ENCODE measurements at regions of chr3 and their contacts with region 1.

Region 1: DNA sequence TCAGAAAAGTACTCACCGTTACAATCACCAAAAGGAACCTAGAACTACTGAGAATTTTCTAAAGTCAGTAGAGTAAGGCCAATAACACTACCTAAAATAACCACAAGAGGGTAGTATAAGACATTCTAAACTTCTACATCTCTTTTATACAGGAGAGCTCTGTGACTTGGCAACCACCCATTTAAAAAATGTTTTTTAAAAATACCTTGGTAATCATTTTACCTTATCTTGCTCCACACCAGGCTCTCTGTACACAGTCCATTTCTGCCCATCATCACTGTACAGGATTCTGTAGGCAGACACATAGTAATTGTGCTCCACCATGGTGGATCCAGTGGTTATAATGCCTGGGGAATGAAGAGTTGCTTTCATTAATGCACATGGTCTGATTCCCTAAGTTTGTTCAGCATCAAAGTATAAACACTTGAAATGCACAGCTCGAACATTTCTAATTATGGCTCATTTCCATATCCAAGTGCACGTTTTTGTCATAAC is 54.5 kb downstream of the ST3GAL6 start:
- DNase-seq: no peak
- ATAC-seq: peak; percentile 68 to 87
- H3K4me3 ChIP-seq: no peak overlapping the region
- H3K27ac ChIP-seq: no peak overlapping the region
- H3K4me1 ChIP-seq: no peaks in the 10 kb centered on the region
- H3K27me3 ChIP-seq: no peaks in the 10 kb centered on the region
- CTCF ChIP-seq: peak; percentile 60 to 84 (median 75)
- POLR2A ChIP-seq: no peak

Region 2: GRCh38 chr3:98039322-98040024 is 778.1 kb before region 1 on chr3:
- in situ Hi-C with region 1: loop called in 1 of 4 experiments (anchors 25 kb)
- intact Hi-C with region 1: no loop called
- DNase-seq: peak; percentile 4 to 15
- ATAC-seq: peak; percentile 94 to 96
- H3K4me3 ChIP-seq: peak overlapping the region; percentile 16 to 36 (median 27)
- H3K27ac ChIP-seq: no peak overlapping the region
- H3K4me1 ChIP-seq: no peaks in the 10 kb centered on the region
- H3K27me3 ChIP-seq: no peaks in the 10 kb centered on the region
- CTCF ChIP-seq: peak; percentile 50 to 82 (median 75)
- POLR2A ChIP-seq: no peak

Region 3: GRCh38 chr3:98602078-98602678 is 215.4 kb before region 1 on chr3:
- in situ Hi-C with region 1: loop called (anchors 5 to 10 kb)
- intact Hi-C with region 1: no loop called
- DNase-seq: no peak
- ATAC-seq: peak; percentile 51 to 56
- H3K4me3 ChIP-seq: no peak overlapping the region
- H3K27ac ChIP-seq: no peak overlapping the region
- H3K4me1 ChIP-seq: no peaks in the 10 kb centered on the region
- H3K27me3 ChIP-seq: no peaks in the 10 kb centered on the region
- CTCF ChIP-seq: peak; percentile 29 to 70 (median 55)
- POLR2A ChIP-seq: no peak

Region 4: DNA sequence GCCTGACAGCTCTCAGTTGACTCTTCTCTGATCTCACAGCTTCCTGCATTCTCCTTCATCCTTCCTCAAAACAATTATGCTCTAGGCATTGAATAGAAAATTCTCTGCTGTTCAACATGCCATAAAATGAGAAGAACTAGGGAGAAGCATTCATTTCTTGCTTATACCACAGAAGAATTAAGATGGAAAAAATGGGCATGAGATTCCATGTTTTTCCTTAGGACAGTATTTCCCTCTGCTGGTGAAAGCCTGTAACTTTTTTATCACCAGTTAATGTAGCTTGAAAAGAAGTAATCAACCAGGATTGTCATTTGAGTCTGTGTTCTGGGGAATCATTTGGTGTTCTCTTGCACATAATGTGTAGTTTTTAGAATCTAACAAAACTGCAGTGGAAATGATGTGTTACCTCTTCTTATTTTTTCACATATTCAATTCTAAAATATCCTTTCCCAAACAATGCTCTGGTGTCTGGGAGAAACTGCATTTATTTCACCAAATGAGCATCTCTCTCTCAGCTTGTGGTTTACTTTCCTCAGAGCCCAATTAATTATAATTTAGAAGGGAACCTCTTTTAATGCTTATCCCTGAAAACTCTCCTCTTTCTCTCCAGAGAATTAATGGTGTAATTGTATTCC is 176.7 kb after region 1 on chr3:
- in situ Hi-C with region 1: loop called (anchors 5 to 10 kb)
- intact Hi-C with region 1: loop called (anchors 1 kb)
- DNase-seq: no peak
- ATAC-seq: peak in 1 of 2 donors; percentile 65
- H3K4me3 ChIP-seq: no peak overlapping the region
- H3K27ac ChIP-seq: no peak overlapping the region
- H3K4me1 ChIP-seq: no peaks in the 10 kb centered on the region
- H3K27me3 ChIP-seq: no peaks in the 10 kb centered on the region
- CTCF ChIP-seq: peak; percentile 10 to 62 (median 54)
- POLR2A ChIP-seq: no peak

Region 5: GRCh38 chr3:99071096-99071495 is 253.5 kb after region 1 on chr3:
- in situ Hi-C with region 1: no loop called
- intact Hi-C with region 1: no loop called
- DNase-seq: no peak
- ATAC-seq: no peak
- H3K4me3 ChIP-seq: no peak overlapping the region
- H3K27ac ChIP-seq: no peak overlapping the region
- H3K4me1 ChIP-seq: no peaks in the 10 kb centered on the region
- H3K27me3 ChIP-seq: no peaks in the 10 kb centered on the region
- CTCF ChIP-seq: no peak
- POLR2A ChIP-seq: no peak

Region 6: GRCh38 chr3:99753268-99753975 is 935.8 kb after region 1 on chr3:
- in situ Hi-C with region 1: loop called in 1 of 4 experiments (anchors 25 kb)
- intact Hi-C with region 1: no loop called
- DNase-seq: no peak
- ATAC-seq: peak in 1 of 2 donors; percentile 49
- H3K4me3 ChIP-seq: no peak overlapping the region
- H3K27ac ChIP-seq: no peak overlapping the region
- H3K4me1 ChIP-seq: peaks cover 7% of the 10 kb centered on the region in 2 donors
- H3K27me3 ChIP-seq: no peaks in the 10 kb centered on the region
- CTCF ChIP-seq: peak; percentile 38 to 63 (median 54)
- POLR2A ChIP-seq: no peak

Measured in gastrocnemius medialis (tissue), 4 donors.